ENCODE measurements at regions of chr19 and their contacts with region 1.

Region 1: GRCh38 chr19:9796113-9796773 is 22.6 kb downstream of the FBXL12 start:
- DNase-seq: peak; percentile 85 to 87
- ATAC-seq: no peak
- H3K4me3 ChIP-seq: no peak overlapping the region
- H3K27ac ChIP-seq: no peak overlapping the region
- H3K4me1 ChIP-seq: no peaks in the 10 kb centered on the region
- H3K27me3 ChIP-seq: no peaks in the 10 kb centered on the region

Region 2: DNA sequence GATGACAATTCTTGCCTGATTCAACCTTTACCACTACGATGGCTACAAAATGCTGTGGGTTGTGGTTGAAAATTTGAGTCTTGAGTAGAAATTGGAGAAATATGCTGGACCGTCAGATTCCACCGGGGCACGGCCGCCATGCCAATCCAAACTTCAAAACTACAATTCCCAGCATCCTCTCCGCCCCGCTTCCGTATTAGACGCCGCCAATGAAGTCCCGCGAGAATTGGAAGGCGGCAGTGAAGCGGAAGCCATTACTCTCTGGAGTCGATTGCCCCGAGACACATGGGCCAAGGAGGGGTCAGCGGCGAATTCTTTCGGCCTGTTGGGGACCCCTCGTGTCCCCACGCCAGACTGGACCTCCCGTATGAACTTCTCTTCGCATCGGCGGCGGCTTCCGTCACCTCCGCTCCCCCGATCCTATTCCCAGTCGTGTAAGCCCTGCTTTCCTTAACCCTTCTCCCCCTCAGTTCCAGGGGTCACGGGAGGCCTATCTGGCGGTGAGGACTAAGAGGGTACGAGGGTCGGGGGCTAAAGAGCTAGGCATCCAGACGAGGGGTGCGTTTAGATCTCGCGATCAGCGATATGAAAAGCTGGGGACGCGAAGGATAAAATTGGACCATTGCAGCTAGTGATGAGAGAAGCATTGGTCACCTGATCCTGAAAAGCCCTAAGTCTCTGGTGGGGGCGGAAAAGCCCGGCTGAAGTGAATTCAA is 655.9 kb before region 1 on chr19 and contains the start of gene ZNF317:
- intact Hi-C with region 1: loop called in 1 of 2 experiments (anchors 10 kb)
- DNase-seq: peak; percentile 94 to 96
- ATAC-seq: peak; percentile 98
- H3K4me3 ChIP-seq: peak within 1 kb of the TSS; percentile 59 to 79
- H3K27ac ChIP-seq: peak within 1 kb of the TSS; percentile 6 to 15
- H3K4me1 ChIP-seq: peaks cover 0 to 2% of the 10 kb centered on the region in 2 donors
- H3K27me3 ChIP-seq: no peaks in the 10 kb centered on the region
- total RNA-seq, gene ZNF317: 22.6 to 24.6 TPM

Region 3: DNA sequence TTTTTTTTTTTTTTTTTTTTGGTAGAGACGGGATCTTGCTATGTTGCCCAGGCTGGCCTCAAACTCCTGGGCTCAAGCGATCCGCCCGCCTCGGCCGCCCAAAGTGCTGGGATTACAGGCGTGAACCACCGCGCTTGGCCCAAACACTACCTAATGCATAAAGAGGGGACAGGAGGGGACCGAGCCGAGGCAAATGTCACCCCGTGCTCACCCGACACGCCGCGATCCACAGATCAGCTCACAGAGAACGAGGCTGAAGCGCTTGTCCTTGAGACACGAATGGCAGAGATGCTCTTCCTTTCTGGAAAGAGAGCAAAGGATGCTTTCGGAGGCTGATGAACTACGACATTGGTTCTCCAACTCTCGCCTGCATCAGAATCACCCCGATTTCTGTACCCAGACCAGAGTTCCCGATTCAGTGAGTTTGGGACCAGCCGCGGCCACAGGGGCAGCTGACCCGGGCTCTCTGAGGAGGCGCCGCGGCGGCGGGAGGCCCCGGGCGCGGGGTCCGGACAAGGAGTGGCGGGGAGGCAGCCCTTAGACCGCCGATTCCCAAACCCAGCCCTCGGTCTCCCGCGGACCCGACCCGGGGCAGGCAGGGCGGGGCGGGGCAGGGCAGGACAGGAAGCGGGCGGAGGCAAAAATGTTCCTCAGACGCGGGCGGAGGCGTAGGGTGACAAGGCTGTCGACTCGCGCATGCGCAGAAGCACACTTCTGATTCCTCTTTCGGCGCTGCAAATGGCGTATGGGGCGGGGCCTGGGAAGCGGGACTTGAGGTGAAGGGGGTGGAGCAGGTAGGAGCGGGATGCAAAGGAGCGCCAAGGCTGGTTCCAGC is 486.9 kb before region 1 on chr19 and contains the start of gene ZNF699:
- intact Hi-C with region 1: loop called (anchors 5 kb)
- DNase-seq: peak; percentile 99 to 100
- ATAC-seq: peak; percentile 99
- H3K4me3 ChIP-seq: peak within 1 kb of the TSS; percentile 60 to 80
- H3K27ac ChIP-seq: peak within 1 kb of the TSS; percentile 63 to 79
- H3K4me1 ChIP-seq: no peaks in the 10 kb centered on the region
- H3K27me3 ChIP-seq: no peaks in the 10 kb centered on the region
- total RNA-seq, gene ZNF699: 12.1 to 12.4 TPM

Region 4: DNA sequence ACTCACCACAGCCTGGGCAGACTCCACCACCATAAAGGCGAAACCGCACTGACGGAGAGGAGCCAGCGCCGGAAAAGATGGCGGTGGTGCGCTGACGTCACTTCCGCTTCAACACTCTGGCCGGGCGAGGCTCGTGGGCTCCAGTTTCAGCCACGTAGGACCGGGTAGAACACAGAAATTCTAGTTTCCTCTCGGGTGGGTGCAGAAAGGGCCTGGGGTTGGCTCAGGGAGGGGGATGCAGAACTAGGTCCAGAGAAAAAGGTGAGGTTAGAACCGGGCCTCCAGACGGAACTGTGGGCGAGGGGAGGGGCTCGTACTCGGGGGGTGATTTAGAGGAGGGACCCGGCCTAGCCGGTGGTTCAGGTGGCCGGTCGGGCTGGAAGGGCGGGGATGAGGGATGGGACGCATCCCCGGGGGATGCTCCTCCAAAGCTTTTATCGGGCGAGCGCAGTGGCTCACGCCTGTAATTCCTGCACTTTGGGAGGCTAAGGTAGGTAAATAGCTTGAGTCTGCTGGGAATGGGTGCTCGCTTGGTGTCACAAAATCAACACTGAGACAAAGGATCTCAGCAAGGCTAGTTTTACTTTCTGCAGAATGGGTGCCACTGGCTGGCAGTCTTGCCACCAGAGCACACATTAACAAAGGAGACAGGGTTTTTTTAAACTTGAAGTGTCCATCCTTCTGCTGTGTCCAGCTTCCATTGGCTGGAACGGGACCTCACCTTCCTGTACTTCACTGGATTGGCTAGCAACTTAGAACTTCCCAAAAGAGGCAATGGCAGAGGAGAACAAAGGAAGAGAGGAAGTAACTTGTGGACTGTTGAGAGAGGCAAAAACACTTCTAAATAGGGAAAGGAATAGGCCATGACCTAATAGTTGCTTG is 174.8 kb before region 1 on chr19 and contains the start of gene ZNF561:
- intact Hi-C with region 1: loop called (anchors 2 to 5 kb)
- DNase-seq: peak; percentile 93 to 95
- ATAC-seq: peak; percentile 95
- H3K4me3 ChIP-seq: peak within 1 kb of the TSS; percentile 12 to 48
- H3K27ac ChIP-seq: peak within 1 kb of the TSS; percentile 24 to 45
- H3K4me1 ChIP-seq: no peaks in the 10 kb centered on the region
- H3K27me3 ChIP-seq: no peaks in the 10 kb centered on the region
- total RNA-seq, gene ZNF561: 37.5 to 38.3 TPM

Region 5: DNA sequence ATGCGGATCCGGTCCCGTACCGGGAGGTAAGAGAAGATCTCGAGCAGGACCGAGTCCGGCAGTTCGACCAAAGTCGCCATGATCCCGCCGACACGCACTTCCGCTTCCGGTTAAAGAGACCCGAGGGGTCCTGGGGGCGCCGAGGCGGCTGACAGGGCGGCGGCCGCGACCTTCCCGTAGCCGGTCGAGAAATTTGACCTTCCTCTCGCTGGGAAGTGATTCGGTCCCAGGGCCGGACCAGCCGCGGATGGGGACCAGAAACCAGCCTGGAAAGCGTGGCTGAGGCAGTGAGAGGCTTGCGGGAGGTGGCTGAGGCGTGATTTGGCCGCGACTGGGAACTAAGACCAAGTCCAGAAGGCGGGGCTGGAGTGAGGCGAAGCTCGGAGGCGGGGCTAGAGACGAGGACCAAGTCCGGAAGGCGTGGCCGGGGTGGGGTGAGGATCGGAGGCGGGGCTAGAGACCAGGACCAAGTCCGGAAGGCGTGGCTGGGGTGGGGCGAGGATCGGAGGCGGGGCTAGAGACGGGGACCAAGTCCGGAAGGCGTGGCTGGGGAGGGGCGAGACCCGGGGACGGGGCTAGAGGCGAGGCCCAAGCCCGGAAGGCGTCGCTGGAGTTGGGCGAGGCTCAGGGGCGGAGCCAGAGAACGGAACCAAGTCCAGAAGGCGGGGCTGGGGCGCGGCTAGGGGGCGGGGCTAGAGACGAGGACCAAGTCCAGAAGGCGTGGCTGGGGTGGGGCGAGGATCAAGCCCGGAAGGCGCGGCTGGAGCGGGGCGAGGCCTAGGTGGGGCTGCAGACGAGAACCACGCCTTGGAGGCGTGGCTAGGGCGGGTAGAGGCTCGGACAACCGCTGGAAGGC is 22.7 kb after region 1 on chr19 and contains the start of gene FBXL12:
- intact Hi-C with region 1: loop called (anchors 1 to 2 kb)
- DNase-seq: peak; percentile 100
- ATAC-seq: peak; percentile 98
- H3K4me3 ChIP-seq: peak within 1 kb of the TSS; percentile 77 to 88
- H3K27ac ChIP-seq: peak within 1 kb of the TSS in 1 of 2 donors; percentile 65
- H3K4me1 ChIP-seq: no peaks in the 10 kb centered on the region
- H3K27me3 ChIP-seq: no peaks in the 10 kb centered on the region
- total RNA-seq, gene FBXL12: 29.1 to 29.8 TPM